Gastrocnemius medialis (tissue), 4 donors: ENCODE measurements at regions of chr5 and their contacts with region 1.

Region 1: GRCh38 chr5:141040771-141041426 is 10.3 kb upstream of the PCDHB1 start:
- DNase-seq: peak; percentile 50 to 76
- ATAC-seq: peak; percentile 68 to 90
- H3K4me3 ChIP-seq: peak overlapping the region; percentile 19 to 50 (median 37)
- H3K27ac ChIP-seq: no peak overlapping the region
- H3K4me1 ChIP-seq: peaks cover 6 to 7% of the 10 kb centered on the region in 2 donors
- H3K27me3 ChIP-seq: peaks cover 0 to 6% (median 2%) of the 10 kb centered on the region in 3 donors
- CTCF ChIP-seq: peak; percentile 34 to 61 (median 55)
- POLR2A ChIP-seq: peak in 1 of 2 donors; percentile 25

Region 2: DNA sequence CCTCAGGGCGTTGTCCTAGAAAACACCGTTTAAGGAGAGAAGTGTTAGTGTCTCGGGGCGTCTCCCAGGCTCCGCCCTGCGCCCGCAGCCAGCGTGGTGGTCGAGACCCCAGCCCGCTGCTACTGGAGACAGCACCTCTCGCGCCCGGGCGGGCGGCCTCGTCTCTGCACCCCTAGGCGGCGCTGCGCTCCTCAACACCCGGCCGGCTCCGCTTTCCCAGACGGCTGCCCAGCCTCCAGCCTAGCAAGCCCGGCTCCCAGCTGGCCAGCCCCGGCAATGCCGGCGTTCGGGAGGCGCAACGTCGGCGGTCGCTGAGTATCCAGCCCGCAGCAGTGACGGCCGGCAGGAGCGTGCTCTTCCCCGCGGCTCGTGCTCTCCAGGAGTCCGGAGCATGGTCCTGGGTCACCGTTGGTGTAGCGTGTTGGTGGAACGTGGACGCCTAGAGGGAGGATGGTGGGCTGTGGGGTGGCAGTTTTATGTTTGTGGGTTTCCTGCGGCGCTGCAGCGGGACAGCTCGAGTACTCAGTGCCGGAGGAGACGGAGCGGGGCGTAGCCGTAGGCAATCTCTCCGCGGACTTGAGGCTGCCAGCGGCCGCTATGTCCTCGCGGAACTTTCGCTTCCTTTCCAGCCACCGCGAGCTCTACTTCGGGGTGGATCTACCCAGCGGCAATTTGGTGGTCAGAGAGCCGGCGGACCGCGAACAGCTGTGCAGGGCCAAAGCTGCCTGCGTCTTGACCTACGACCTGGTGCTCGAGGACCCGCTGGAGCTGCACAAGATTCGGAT is 114.3 kb before region 1 on chr5:
- in situ Hi-C with region 1: loop called in 1 of 4 experiments (anchors 10 kb)
- intact Hi-C with region 1: loop called (anchors 2 kb)
- DNase-seq: peak; percentile 14
- ATAC-seq: peak; percentile 36 to 41
- H3K4me3 ChIP-seq: peak overlapping the region; percentile 43 to 54 (median 46)
- H3K27ac ChIP-seq: no peak overlapping the region
- H3K4me1 ChIP-seq: no peaks in the 10 kb centered on the region
- H3K27me3 ChIP-seq: peaks cover 28 to 37% (median 29%) of the 10 kb centered on the region in 3 donors
- CTCF ChIP-seq: peak in 3 of 5 experiments; percentile 37 to 56 (median 42)
- POLR2A ChIP-seq: no peak